CD8-positive, alpha-beta T cell (primary cell): ENCODE measurements at regions of chr12 and their contacts with region 1.

Region 1: DNA sequence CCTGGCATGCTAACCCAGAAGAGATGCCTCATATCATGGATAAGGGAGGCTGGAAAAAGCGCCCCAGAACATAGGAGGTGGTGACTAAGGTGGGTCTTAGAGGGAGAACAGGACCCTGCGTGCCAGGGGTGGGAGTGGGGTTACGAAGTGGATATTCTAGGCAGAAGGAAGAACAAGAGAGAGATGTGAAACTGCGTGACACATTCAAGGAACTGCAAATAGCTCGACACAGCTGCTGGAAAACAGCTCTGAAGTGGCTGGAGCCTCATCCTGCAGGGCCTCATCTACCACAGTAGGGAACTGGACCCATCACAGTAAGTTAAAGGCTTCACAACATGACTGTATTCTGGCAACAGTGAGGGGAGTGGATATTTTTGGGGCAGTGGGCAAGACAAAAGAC is 61.1 kb downstream of the RNF34 start:
- DNase-seq: no peak
- ATAC-seq: no peak
- H3K4me3 ChIP-seq: no peak overlapping the region
- H3K4me3 Mint-ChIP-seq: no peak overlapping the region
- H3K27ac ChIP-seq: no peak overlapping the region
- H3K27ac Mint-ChIP-seq: no peak overlapping the region
- H3K4me1 ChIP-seq: peaks cover 17% of the 10 kb centered on the region
- H3K4me1 Mint-ChIP-seq: peaks cover 47% of the 10 kb centered on the region
- H3K27me3 ChIP-seq: no peaks in the 10 kb centered on the region
- H3K27me3 Mint-ChIP-seq: no peaks in the 10 kb centered on the region
- CTCF ChIP-seq: no peak

Region 2: DNA sequence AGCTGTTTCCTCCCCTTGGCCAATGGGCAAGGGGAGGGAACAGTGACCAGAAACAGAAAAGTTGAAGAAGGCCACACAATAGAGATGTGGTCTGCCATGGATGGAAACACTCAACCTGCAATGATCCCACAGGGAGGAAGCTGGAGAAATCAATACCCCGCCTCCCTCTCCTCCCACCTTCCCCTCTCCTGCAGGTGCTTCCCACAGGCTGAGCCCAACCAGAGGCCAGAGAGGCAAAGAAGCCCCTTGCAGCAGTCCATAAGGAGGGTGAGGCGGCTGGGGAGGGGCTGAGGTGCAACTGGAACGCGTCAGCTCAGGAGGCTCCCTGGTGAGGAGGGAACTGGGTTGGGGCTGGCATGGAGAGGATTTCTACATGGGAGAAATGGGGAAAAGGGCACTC is 22.9 kb after region 1 on chr12:
- CTCF ChIA-PET with region 1: interaction called, 14 read pairs
- POLR2A ChIA-PET with region 1: no interaction called
- intact Hi-C with region 1: no loop called
- DNase-seq: no peak
- ATAC-seq: no peak
- H3K4me3 ChIP-seq: no peak overlapping the region
- H3K4me3 Mint-ChIP-seq: no peak overlapping the region
- H3K27ac ChIP-seq: no peak overlapping the region
- H3K27ac Mint-ChIP-seq: no peak overlapping the region
- H3K4me1 ChIP-seq: no peaks in the 10 kb centered on the region
- H3K4me1 Mint-ChIP-seq: peaks cover 8% of the 10 kb centered on the region
- H3K27me3 ChIP-seq: no peaks in the 10 kb centered on the region
- H3K27me3 Mint-ChIP-seq: no peaks in the 10 kb centered on the region
- CTCF ChIP-seq: no peak

Region 3: DNA sequence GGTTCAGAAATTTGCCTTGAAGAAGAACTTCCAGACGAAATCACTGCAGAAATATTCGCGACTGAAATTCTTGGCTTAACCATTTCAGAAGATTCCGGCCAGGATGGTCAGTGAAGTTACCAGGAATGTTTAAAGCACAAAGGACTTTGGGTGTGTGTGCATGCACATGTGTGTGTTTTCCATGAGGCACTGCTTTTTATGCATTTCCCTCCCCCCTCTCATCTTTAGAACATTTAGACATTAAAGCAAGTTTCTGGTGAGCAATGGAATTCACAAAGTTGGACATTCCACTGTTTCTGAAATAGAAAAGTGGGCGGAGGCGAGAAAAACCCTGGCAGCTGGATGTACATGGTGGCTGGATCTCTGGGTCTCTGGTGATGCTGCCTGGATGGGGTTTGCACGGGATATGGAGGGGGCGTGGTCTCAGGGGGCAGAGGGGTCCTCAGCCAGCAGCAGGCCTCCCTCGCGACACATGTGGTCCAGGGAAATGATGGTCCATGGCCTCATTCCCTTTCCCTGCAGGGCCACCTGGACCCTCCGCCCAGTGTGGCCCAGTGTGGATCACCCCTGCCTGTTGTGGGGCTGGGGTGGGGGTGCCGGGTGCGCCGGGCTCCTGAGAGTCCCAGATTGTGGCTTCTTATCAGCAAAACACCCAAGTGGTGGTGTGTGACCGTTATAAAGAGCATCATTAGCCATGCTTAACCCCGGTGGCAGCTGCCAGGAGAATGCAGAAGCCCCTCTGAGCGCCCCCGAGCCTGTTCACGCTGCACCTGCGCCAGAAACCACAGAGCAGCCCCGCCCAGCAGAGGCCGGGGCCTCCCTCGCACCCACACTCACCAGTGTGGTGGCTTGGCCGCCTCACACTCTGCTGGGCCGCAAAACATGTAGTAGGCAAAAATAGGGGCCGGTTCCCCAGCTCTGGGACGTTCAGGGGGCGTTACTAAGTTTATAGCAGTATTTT is 542.9 kb after region 1 on chr12:
- CTCF ChIA-PET with region 1: no interaction called
- POLR2A ChIA-PET with region 1: no interaction called
- intact Hi-C with region 1: no loop called
- DNase-seq: peak in 4 of 9 experiments; percentile 24 to 52 (median 36)
- ATAC-seq: peak; percentile 52
- H3K4me3 ChIP-seq: no peak overlapping the region
- H3K4me3 Mint-ChIP-seq: peak overlapping the region; percentile 67
- H3K27ac ChIP-seq: no peak overlapping the region
- H3K27ac Mint-ChIP-seq: no peak overlapping the region
- H3K4me1 ChIP-seq: peaks cover 43% of the 10 kb centered on the region
- H3K4me1 Mint-ChIP-seq: peaks cover 34% of the 10 kb centered on the region
- H3K27me3 ChIP-seq: no peaks in the 10 kb centered on the region
- H3K27me3 Mint-ChIP-seq: no peaks in the 10 kb centered on the region
- CTCF ChIP-seq: no peak

Region 4: DNA sequence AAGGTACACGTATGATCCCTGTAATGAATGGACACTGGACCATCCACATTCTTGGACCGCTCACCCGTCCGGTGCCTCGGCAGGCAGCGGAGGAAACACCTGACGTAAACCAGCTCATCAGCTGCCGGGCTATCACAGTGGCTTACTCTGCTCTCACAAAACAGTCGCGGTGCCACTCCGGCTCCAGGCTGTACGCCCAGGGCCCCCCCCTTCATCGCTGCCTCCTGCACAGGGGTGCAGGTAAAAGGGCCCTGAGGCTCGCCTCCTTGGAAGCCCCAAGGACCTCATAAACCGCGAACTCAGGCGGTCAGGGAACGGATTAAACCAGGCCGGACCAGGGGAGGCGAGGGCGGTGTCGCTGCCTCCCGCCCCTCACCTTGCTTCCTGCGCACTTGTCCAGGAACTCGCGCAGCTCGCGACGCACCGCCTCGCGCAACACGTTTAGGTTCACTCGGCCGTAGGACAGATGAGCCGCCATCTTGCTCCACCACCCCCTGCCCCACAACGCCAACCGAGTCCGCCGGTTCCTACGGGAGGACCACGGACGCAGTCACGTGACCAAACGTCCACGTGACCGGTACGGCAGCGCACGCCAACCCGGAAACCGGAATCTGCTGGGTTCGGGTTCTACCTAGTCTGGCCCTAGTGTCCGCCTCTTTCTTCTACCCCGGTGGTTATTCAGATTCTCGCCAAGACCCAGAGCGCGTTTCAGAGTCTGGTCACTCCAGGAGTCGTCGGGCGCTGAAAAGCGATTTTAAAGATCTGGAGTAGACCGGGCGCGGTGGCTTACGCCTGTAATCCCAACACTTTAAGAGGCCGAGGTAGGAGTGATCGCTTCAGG is 805.1 kb after region 1 on chr12 and contains the start of gene VPS33A:
- CTCF ChIA-PET with region 1: no interaction called
- POLR2A ChIA-PET with region 1: no interaction called
- intact Hi-C with region 1: no loop called
- DNase-seq: peak; percentile 82 to 97 (median 92)
- ATAC-seq: peak; percentile 72
- H3K4me3 ChIP-seq: peak within 1 kb of the TSS; percentile 89 to 95
- H3K4me3 Mint-ChIP-seq: peak within 1 kb of the TSS; percentile 97
- H3K27ac ChIP-seq: peak within 1 kb of the TSS; percentile 95 to 96
- H3K27ac Mint-ChIP-seq: peak within 1 kb of the TSS; percentile 100
- H3K4me1 ChIP-seq: peaks cover 9% of the 10 kb centered on the region
- H3K4me1 Mint-ChIP-seq: peaks cover 36% of the 10 kb centered on the region
- H3K27me3 ChIP-seq: no peaks in the 10 kb centered on the region
- H3K27me3 Mint-ChIP-seq: no peaks in the 10 kb centered on the region
- CTCF ChIP-seq: no peak
- total RNA-seq, gene VPS33A: 11.6 to 13.1 TPM